Posterior vena cava (tissue), 2 donors: ENCODE measurements at regions of chr2 and their contacts with region 1.

Region 1: DNA sequence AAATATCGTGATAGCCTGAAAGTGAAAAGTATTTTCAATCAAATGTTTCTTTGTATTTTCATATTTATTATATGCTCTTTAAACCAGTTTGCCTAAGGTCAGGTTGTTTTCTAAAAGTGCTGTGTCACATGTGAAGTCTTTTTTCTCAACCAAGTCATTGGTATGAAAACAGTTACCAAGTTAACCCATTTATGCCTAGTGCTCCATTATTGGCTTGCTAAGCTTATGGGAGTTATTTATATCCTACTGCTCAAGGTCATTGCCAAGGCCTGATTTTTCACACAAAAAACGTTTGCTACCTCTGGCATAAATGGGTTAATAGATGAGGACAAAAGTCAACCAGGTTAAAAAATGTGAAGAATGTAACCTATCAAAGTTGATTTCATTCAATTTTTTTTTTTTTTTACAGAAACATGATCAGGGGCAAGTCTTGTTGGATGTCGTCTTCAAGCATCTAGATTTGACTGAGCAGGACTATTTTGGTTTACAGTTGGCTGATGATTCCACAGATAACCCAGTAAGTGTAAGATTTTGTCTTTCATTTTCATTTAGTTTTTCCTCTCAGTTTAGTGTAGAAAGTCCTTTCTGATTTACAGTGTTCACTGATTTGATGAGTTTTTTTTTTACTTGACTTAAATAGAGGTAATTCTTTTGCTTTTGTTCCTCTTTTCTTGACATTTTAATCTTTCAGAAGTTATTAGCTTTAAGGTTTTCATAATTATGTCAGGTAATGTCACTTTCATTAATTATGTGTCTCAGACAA is 102.6 kb downstream of the PTPN4 start:
- DNase-seq: no peak

Region 2: DNA sequence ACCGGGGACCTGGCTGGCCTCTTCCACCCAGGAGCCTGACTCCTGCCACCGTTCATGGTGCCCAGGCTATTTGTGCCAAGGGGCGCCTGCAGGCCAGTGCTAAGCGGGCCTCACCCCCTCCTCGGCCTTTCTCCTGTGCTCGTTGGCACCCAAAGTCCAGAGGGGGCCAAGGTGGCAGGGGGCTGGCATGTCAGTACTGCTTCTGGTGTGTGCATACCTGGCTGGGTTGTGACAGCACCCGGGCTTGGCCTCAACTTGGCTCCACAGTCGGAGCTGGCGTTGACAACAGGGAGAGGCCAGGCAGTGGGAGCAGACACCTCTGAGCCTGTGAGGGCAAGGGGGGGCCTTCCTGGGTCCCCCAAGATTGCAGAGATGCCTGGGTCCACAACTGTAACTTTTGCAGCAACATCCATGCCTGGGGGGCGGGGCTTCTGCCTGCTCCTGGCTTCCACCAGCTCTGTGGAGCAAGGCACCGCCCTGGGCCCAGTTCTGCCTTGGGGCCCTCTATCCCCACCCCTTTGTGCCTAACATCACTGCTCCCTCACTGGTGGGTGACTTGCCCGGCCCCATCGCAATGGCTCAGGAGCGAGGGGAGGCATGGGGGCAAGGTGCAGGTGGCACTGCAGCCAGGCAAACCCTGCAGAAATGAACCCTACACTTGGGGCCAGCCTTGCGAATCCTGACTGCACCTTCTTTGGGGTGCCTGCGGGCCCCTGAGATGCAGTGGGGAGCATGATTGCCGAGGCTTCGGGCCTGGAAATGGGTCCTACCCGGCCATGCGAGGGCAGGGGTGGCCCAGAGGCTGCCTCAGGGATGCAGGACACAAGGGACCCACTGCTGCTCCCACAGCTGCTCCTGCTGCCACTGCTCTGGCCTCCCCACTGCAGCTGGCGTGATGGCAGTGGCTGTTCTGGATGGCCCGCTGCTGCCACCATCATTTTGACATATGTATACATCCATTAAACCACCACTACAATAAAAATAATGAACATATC is 66.7 kb before region 1 on chr2:
- intact Hi-C with region 1: loop called in 1 of 2 experiments (anchors 2 kb)
- DNase-seq: no peak

Region 3: DNA sequence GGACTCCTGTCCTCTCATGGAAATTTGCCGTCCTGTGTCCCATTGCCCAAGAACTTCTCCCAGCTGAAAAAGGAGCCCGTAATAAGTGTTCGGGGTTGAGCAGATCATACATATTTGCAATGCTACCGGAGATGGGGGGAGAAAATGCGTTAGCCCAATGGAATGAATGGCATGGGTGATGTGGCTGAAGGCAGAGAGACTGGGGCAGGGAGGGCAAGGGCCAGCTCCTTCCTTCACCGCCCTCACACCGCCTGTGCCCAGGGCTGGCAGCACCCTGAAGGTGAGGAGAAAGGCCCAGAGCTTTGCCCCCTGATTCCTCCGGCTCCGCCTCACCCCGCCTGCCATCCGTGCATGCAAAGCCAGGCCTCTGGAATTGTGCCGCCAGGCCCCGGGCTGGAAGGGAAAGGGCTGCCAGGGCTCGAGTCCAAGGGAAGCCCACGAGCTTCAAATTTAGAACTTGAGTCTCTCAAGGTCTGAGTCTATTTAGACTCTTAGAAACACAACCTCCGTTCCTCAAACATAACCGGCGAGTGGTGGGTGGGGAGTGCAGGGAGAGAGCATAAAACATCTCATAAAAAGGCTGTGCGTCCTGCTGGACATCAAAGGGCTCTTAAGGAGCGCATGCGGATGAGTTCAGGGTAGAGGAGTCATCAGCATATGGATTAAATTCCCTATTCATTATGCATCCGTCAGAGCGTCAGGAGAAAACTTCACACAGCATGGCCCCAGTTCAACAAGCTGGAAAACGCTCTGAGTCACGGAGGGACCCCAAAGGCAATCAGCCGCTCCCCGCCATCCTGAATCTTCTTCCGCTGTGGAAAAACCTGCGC is 751.6 kb after region 1 on chr2:
- intact Hi-C with region 1: no loop called
- DNase-seq: no peak